CD8-positive, alpha-beta T cell (primary cell): ENCODE measurements at regions of chr5 and their contacts with region 1.

Region 1: DNA sequence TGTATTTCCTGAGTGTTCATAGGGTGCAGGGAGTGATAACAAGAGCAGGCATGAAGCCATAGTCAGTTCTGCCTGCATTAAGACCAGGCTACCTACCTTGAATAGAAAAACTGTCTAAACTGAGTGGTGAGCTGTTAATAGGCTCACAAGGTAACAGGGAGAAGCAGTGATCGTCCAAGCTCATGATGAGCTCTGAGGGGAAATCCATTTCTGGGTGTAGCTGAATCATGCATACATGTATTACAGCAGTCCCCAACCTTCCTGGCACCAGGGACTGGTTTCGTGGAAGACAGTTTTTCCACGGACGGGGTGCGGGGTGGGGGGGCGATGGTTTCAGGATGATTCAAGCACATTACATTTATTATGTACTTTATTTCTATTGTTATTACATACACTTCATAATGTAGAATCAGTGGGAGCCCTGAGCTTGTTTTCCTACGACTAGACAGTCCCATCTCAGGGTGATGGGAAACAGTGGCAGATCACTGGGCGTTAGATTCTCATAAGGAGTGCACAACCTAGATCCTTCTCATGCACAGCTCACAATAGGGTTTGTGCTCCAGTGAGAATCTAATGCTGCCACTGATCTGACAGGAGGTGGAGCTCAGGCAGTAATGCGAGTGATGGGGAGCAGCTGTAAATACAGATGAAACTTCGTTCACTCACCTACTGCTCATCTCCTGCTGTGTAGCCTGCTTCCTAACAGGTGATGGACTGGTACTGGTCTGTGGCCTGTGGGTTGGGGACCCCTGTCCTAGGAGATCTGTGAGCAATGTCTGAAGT is 100.0 kb upstream of the IL6ST start:
- DNase-seq: peak in 1 of 9 experiments; percentile 33
- ATAC-seq: no peak
- H3K4me3 ChIP-seq: no peak overlapping the region
- H3K4me3 Mint-ChIP-seq: no peak overlapping the region
- H3K27ac ChIP-seq: no peak overlapping the region
- H3K27ac Mint-ChIP-seq: peak overlapping the region; percentile 42
- H3K4me1 ChIP-seq: peaks cover 89% of the 10 kb centered on the region
- H3K4me1 Mint-ChIP-seq: peaks cover 72% of the 10 kb centered on the region
- H3K27me3 ChIP-seq: no peaks in the 10 kb centered on the region
- H3K27me3 Mint-ChIP-seq: no peaks in the 10 kb centered on the region
- CTCF ChIP-seq: no peak

Region 2: GRCh38 chr5:55923177-55923771 is 171.5 kb before region 1 on chr5:
- CTCF ChIA-PET with region 1: no interaction called
- POLR2A ChIA-PET with region 1: no interaction called
- intact Hi-C with region 1: no loop called
- DNase-seq: peak in 5 of 9 experiments; percentile 24 to 55 (median 34)
- ATAC-seq: peak; percentile 46
- H3K4me3 ChIP-seq: peak overlapping the region; percentile 55 to 61
- H3K4me3 Mint-ChIP-seq: peak overlapping the region; percentile 95
- H3K27ac ChIP-seq: no peak overlapping the region
- H3K27ac Mint-ChIP-seq: peak overlapping the region; percentile 64
- H3K4me1 ChIP-seq: peaks cover 3% of the 10 kb centered on the region
- H3K4me1 Mint-ChIP-seq: peaks cover 17% of the 10 kb centered on the region
- H3K27me3 ChIP-seq: no peaks in the 10 kb centered on the region
- H3K27me3 Mint-ChIP-seq: no peaks in the 10 kb centered on the region
- CTCF ChIP-seq: no peak

Region 3: GRCh38 chr5:56083286-56083854 is 11.4 kb before region 1 on chr5:
- CTCF ChIA-PET with region 1: no interaction called
- POLR2A ChIA-PET with region 1: interaction called, 4 read pairs
- intact Hi-C with region 1: loop called in 1 of 2 experiments (anchors 1 kb)
- DNase-seq: no peak
- ATAC-seq: no peak
- H3K4me3 ChIP-seq: no peak overlapping the region
- H3K4me3 Mint-ChIP-seq: no peak overlapping the region
- H3K27ac ChIP-seq: no peak overlapping the region
- H3K27ac Mint-ChIP-seq: no peak overlapping the region
- H3K4me1 ChIP-seq: peaks cover 25% of the 10 kb centered on the region
- H3K4me1 Mint-ChIP-seq: peaks cover 27% of the 10 kb centered on the region
- H3K27me3 ChIP-seq: no peaks in the 10 kb centered on the region
- H3K27me3 Mint-ChIP-seq: no peaks in the 10 kb centered on the region
- CTCF ChIP-seq: no peak